ENCODE measurements at regions of chr2 and their contacts with region 1.

Region 1: GRCh38 chr2:21042958-21043743 is 722 bp downstream of the APOB start:
- DNase-seq: peak; percentile 51 to 68
- ATAC-seq: peak; percentile 48 to 79 (median 68)
- H3K4me3 ChIP-seq: peak overlapping the region in 7 of 10 donors; percentile 5 to 44 (median 34)
- H3K27ac ChIP-seq: peak overlapping the region in 7 of 10 donors; percentile 13 to 48 (median 36)
- H3K4me1 ChIP-seq: peaks cover 0 to 20% (median 8%) of the 10 kb centered on the region in 9 donors
- H3K27me3 ChIP-seq: peaks cover 0 to 16% (median 9%) of the 10 kb centered on the region in 7 donors
- CTCF ChIP-seq: peak; percentile 97 to 99 (median 98)

Region 2: DNA sequence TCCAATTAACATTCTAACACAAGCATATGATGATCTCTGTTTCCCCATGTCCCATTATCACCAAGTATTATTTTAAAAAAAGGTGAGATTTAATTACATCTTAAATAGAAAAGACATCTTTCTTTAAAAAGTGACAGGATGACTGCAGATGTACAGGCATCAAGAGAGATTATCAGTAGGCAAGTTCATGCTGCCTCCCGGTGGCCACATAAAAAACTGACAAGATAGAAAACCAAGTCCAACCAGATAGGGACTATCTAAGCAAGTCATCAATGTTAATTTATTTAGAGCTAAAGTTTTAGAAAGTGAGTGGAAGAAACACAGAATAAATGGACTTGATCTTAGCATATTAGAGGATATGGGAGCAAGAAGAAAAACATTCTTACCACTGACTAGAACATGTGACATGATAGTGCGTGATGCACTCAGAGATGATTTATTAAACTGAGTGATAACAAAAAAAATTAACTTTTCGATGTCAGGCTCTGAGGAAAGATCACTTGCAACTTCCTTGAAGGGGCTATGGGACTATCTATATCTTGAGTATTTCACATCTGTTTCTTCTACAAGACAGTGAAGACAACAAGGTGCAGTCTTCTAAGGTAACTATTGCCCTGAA is 75.3 kb after region 1 on chr2:
- intact Hi-C with region 1: loop called (anchors 1 to 5 kb)
- DNase-seq: peak in 1 of 2 donors; percentile 9
- ATAC-seq: peak in 1 of 8 donors; percentile 62
- H3K4me3 ChIP-seq: no peak overlapping the region
- H3K27ac ChIP-seq: no peak overlapping the region
- H3K4me1 ChIP-seq: no peaks in the 10 kb centered on the region
- H3K27me3 ChIP-seq: peaks cover 0 to 30% (median 4%) of the 10 kb centered on the region in 7 donors
- CTCF ChIP-seq: peak; percentile 10 to 63 (median 54)

Region 3: DNA sequence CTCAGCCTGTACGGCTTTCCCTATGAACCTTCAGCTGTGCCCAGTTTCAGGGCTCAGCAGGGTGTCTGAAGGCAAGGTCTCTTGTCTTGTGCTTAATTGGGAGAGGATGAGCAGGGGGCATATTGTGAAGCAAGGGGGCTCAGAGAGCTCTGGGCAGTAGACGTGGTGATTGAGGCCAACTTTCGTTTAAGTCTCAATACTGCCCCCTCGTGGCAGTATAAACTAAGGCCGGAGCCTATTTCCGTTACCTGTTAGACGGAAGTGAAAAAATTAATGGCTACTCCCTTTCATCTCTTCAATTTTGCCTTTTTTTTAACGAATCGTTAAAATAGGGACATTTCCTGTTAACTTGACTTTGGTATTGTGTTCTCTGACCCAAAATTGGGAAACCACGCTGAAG is 274.0 kb after region 1 on chr2:
- intact Hi-C with region 1: loop called (anchors 1 to 10 kb)
- DNase-seq: peak; percentile 3 to 37
- ATAC-seq: peak; percentile 53 to 79 (median 66)
- H3K4me3 ChIP-seq: no peak overlapping the region
- H3K27ac ChIP-seq: no peak overlapping the region
- H3K4me1 ChIP-seq: peaks cover 0 to 8% (median 0%) of the 10 kb centered on the region in 9 donors
- H3K27me3 ChIP-seq: no peaks in the 10 kb centered on the region
- CTCF ChIP-seq: peak; percentile 62 to 82 (median 79)

Region 4: GRCh38 chr2:21326152-21326551 is 283.0 kb after region 1 on chr2:
- intact Hi-C with region 1: loop called in 1 of 10 experiments (anchors 10 kb)
- DNase-seq: no peak
- ATAC-seq: no peak
- H3K4me3 ChIP-seq: no peak overlapping the region
- H3K27ac ChIP-seq: no peak overlapping the region
- H3K4me1 ChIP-seq: peaks cover 0 to 6% (median 0%) of the 10 kb centered on the region in 9 donors
- H3K27me3 ChIP-seq: peaks cover 0 to 11% (median 0%) of the 10 kb centered on the region in 7 donors
- CTCF ChIP-seq: no peak